Activated CD4-positive, alpha-beta T cell treated with anti-CD3 and anti-CD28 coated beads for 36 hours (primary cell): ENCODE measurements at regions of chr1 and their contacts with region 1.

Region 1: DNA sequence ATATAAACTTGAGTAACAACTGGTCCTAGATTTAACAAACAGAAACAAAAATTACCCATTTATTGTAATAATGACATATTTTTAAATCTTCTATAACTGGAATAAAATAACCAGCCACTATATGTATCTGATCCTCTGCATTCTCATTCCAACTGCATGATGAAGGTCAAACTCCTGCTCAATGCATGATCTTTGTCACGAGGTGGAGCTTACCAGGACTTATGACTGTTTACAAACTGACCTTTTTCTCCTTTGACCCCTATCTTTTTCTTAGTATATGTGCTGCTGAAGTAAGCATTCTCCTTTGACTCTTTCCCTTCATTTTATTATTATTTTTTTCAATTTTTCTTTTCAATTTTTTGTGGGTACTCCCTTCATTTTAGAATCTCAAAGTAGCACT is 252.2 kb downstream of the PDE4B start:
- DNase-seq: no peak
- ATAC-seq: no peak
- H3K4me3 Mint-ChIP-seq: no peak overlapping the region
- H3K27ac Mint-ChIP-seq: no peak overlapping the region
- H3K4me1 Mint-ChIP-seq: no peaks in the 10 kb centered on the region
- H3K27me3 Mint-ChIP-seq: peaks cover 10% of the 10 kb centered on the region

Region 2: GRCh38 chr1:65866439-65866838 is 178.5 kb before region 1 on chr1:
- CTCF ChIA-PET with region 1: no interaction called
- POLR2A ChIA-PET with region 1: no interaction called
- intact Hi-C with region 1: no loop called
- DNase-seq: no peak
- ATAC-seq: peak; percentile 57
- H3K4me3 Mint-ChIP-seq: no peak overlapping the region
- H3K27ac Mint-ChIP-seq: no peak overlapping the region
- H3K4me1 Mint-ChIP-seq: no peaks in the 10 kb centered on the region
- H3K27me3 Mint-ChIP-seq: peaks cover 8% of the 10 kb centered on the region

Region 3: GRCh38 chr1:66028035-66028434 is 16.9 kb before region 1 on chr1:
- CTCF ChIA-PET with region 1: interaction called, 3 read pairs
- POLR2A ChIA-PET with region 1: no interaction called
- intact Hi-C with region 1: loop called in 1 of 2 experiments (anchors 1 kb)
- DNase-seq: no peak
- ATAC-seq: no peak
- H3K4me3 Mint-ChIP-seq: no peak overlapping the region
- H3K27ac Mint-ChIP-seq: no peak overlapping the region
- H3K4me1 Mint-ChIP-seq: no peaks in the 10 kb centered on the region
- H3K27me3 Mint-ChIP-seq: peaks cover 9% of the 10 kb centered on the region

Region 4: DNA sequence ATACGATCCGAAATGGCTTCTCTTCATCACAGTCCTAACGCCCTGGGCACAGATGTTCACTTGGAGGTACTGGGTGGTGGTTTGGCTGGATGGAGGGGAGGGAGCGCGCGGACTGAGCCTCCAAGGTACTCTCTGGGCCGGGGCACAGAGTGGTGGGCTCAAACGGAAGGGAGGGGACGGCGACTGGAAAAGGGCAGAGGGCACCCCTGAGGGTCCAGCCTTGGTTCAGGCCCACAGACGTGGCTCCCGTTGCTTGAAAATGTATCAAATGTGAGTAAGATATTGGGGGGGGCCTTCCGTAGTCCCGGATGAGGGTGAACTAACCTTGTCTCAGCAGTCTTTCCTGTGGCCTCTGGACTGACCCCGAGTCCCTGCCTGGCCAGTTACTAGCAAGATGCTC is 1263.2 kb after region 1 on chr1:
- CTCF ChIA-PET with region 1: no interaction called
- POLR2A ChIA-PET with region 1: no interaction called
- intact Hi-C with region 1: no loop called
- DNase-seq: peak; percentile 38
- ATAC-seq: peak; percentile 4
- H3K4me3 Mint-ChIP-seq: peak overlapping the region; percentile 83
- H3K27ac Mint-ChIP-seq: peak overlapping the region; percentile 88
- H3K4me1 Mint-ChIP-seq: peaks cover 50% of the 10 kb centered on the region
- H3K27me3 Mint-ChIP-seq: no peaks in the 10 kb centered on the region